Activated CD4-positive, alpha-beta T cell treated with anti-CD3 and anti-CD28 coated beads, Interleukin-2, amount 10 ng/mL, durations not matched to agents 24 days and 14 days (primary cell): ENCODE measurements at regions of chr1 and their contacts with region 1.

Region 1: DNA sequence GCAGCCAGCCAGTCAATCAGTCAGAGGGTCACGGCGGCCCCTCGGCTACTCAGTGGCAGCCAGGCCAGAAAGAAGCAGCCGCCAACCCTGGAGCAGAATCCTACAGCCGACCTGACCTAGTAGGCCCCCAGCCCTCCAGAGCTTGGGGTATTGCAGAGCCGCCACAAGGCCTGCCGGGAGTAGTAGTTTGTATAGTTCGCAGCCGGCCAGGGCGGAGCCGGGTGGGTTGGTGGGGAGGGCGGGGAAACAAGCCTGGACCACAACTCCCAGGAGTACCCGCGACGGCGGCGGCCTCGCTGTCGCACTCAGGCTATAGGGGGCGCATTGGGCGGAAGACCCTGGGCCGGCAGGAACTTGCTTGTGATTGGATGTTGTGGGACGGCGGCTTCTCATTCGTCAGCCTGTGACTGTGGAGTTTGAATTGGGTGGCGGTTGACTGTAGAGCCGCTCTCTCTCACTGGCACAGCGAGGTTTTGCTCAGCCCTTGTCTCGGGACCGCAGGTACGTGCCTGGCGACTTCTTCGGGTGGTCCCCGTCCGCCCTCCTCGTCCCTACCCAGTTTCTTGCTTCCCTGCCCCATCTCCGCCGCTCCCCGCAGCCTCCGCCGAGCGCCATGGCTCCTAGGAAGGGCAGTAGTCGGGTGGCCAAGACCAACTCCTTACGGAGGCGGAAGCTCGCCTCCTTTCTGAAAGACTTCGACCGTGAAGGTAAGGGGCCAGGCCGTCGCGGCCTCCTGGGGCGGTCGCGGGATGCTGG is at the start of gene CDCA8:
- DNase-seq: peak; percentile 99
- H3K4me3 Mint-ChIP-seq: peak within 1 kb of the TSS; percentile 99
- H3K27ac Mint-ChIP-seq: peak within 1 kb of the TSS; percentile 96
- H3K4me1 Mint-ChIP-seq: peaks cover 43% of the 10 kb centered on the region
- H3K27me3 Mint-ChIP-seq: peaks cover 2% of the 10 kb centered on the region
- total RNA-seq, gene CDCA8: 35.6 and 35.9 TPM in 2 replicates

Region 2: DNA sequence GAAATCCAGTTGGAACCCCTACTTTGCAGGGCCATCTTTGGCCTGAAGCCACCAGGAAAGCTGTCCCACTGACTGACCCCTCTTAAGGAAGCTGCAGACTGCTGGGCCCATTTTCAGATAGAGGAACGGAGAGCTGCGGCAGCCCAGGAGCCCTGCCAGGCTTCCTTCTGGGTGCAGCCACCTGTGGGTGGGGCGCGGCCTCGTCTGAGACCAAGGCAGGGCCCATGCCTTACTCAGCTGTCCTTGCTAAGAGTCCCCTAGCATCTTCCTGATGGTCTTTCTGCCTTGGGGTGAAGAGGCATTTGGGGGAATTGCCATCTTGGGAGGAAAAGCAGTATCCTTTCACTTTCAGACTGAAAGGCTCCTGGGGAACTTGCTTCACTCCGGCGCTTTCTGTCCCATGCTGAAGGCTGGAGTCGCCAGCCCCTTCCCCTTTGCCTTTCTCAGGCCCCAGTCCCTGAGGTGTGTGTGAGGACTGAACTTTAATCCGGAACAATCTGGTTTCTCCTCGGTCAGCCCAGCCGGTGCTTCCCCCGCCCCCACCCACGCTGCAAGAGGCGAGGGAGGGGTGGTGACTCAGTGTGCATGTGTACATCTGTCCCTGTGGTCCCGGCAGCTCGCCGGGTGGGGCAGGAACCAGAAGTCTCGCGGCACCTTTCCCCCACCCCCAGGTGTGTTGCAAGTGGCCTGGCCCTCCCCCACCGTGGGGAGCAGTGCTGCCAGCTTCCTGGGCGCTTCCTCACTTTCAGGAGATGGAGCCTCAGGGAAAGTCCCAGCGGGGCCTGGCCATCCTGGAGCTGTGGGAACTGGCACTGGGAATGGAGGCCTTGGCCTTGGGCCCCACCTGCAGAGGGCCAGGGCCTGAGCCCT is 212.8 kb before region 1 on chr1:
- intact Hi-C with region 1: loop called (anchors 2 kb)
- DNase-seq: peak; percentile 94
- H3K4me3 Mint-ChIP-seq: peak overlapping the region; percentile 97
- H3K27ac Mint-ChIP-seq: peak overlapping the region; percentile 98
- H3K4me1 Mint-ChIP-seq: peaks cover 32% of the 10 kb centered on the region
- H3K27me3 Mint-ChIP-seq: no peaks in the 10 kb centered on the region

Region 3: DNA sequence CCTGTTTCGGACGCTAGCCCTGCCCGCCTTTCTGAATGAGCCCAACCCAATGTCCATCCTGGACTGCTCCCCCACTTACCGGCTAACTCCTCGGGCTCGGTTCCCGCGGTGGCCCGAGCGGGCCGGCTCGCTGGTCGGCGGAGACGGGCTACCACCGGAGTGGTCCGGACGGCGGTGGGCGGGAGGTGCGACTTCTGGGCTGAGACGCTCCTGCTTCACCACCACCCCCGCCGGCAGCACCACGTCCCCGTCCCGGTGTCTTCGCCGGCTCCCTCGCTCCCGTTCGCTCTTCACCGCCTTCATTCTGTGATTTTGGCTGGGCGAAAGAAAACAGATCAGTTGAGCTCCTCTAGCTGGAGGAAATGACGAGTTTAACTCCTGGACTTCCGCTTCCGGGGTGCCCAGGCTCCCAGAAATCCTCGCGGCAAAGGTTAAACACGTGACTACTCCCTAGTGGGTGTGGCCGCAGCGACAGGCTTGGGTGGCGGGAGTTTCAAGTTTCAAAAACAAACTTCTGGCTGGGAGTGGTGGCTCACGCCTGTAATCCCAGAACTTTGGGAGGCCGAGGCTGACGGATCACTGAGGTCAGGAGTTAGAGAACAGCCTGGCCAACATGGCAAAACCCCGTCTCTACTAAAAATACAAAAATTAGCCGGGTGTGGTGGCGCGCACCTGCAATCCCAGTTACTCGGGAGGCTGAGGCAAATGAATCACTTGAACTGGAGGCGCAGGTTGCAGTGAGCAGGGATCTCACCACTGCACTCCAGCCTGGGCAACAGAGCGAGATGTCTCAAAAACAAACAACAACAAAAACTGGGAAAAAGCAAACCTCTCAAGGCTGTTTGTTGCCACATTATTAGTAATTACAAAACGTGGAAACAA is 138.1 kb before region 1 on chr1 and contains the start of gene SNIP1:
- intact Hi-C with region 1: loop called (anchors 5 kb)
- DNase-seq: peak; percentile 97
- H3K4me3 Mint-ChIP-seq: peak within 1 kb of the TSS; percentile 98
- H3K27ac Mint-ChIP-seq: peak within 1 kb of the TSS; percentile 97
- H3K4me1 Mint-ChIP-seq: peaks cover 46% of the 10 kb centered on the region
- H3K27me3 Mint-ChIP-seq: no peaks in the 10 kb centered on the region
- total RNA-seq, gene SNIP1: 22.7 and 25.4 TPM in 2 replicates

Region 4: GRCh38 chr1:37734629-37735591 is 42.7 kb after region 1 on chr1:
- intact Hi-C with region 1: no loop called
- DNase-seq: peak; percentile 64
- H3K4me3 Mint-ChIP-seq: no peak overlapping the region
- H3K27ac Mint-ChIP-seq: no peak overlapping the region
- H3K4me1 Mint-ChIP-seq: no peaks in the 10 kb centered on the region
- H3K27me3 Mint-ChIP-seq: peaks cover 38% of the 10 kb centered on the region

Region 5: DNA sequence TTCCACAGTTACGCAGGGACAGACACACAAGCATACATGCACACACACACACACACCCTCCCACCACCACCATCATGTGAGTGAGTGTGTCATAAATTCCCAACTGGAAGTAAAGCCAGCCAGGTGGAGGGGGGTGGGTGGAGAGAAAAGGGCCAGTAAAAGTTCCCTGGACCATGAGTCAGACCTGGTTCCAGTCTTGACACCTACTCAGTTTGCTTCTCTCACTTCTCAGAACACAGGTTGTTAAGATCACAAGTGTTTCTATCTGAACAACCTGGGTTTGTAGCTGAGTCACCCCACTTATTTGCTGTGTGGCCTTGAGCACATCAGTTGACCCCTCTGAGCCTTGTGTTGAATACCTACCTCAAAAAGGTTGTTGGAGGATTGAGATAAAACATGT is 63.0 kb after region 1 on chr1:
- intact Hi-C with region 1: loop called (anchors 2 kb)
- DNase-seq: no peak
- H3K4me3 Mint-ChIP-seq: no peak overlapping the region
- H3K27ac Mint-ChIP-seq: peak overlapping the region; percentile 20
- H3K4me1 Mint-ChIP-seq: peaks cover 15% of the 10 kb centered on the region
- H3K27me3 Mint-ChIP-seq: peaks cover 32% of the 10 kb centered on the region

Region 6: GRCh38 chr1:37859507-37860345 is 167.5 kb after region 1 on chr1 and contains the start of gene MTF1:
- intact Hi-C with region 1: loop called (anchors 1 kb)
- DNase-seq: peak; percentile 99
- H3K4me3 Mint-ChIP-seq: peak within 1 kb of the TSS; percentile 89
- H3K27ac Mint-ChIP-seq: peak within 1 kb of the TSS; percentile 96
- H3K4me1 Mint-ChIP-seq: peaks cover 28% of the 10 kb centered on the region
- H3K27me3 Mint-ChIP-seq: no peaks in the 10 kb centered on the region
- total RNA-seq, gene MTF1: 31.2 and 31.6 TPM in 2 replicates

Region 7: GRCh38 chr1:38012363-38013226 is 320.3 kb after region 1 on chr1 and contains the start of gene UTP11:
- intact Hi-C with region 1: loop called (anchors 2 kb)
- DNase-seq: peak; percentile 97
- H3K4me3 Mint-ChIP-seq: peak within 1 kb of the TSS; percentile 92
- H3K27ac Mint-ChIP-seq: peak within 1 kb of the TSS; percentile 95
- H3K4me1 Mint-ChIP-seq: peaks cover 46% of the 10 kb centered on the region
- H3K27me3 Mint-ChIP-seq: no peaks in the 10 kb centered on the region
- total RNA-seq, gene UTP11: 99.5 and 111 TPM in 2 replicates